Heart right ventricle (tissue), 16 donors: ENCODE measurements at regions of chr11 and their contacts with region 1.

Region 1: GRCh38 chr11:1335811-1336761 is 26.7 kb upstream of the TOLLIP start:
- DNase-seq: peak; percentile 49 to 68
- ATAC-seq: peak; percentile 63 to 79 (median 74)
- H3K4me3 ChIP-seq: peak overlapping the region in 9 of 10 donors; percentile 40 to 58 (median 51)
- H3K27ac ChIP-seq: peak overlapping the region in 7 of 10 donors; percentile 35 to 83 (median 52)
- H3K4me1 ChIP-seq: peaks cover 10 to 21% (median 17%) of the 10 kb centered on the region in 9 donors
- H3K27me3 ChIP-seq: peaks cover 0 to 6% (median 0%) of the 10 kb centered on the region in 7 donors
- CTCF ChIP-seq: no peak

Region 2: GRCh38 chr11:1382831-1383607 is 46.9 kb after region 1 on chr11:
- intact Hi-C with region 1: loop called in 1 of 10 experiments (anchors 5 kb)
- DNase-seq: peak; percentile 79 to 80
- ATAC-seq: peak; percentile 87 to 96 (median 92)
- H3K4me3 ChIP-seq: peak overlapping the region; percentile 41 to 66 (median 58)
- H3K27ac ChIP-seq: peak overlapping the region in 9 of 10 donors; percentile 31 to 89 (median 64)
- H3K4me1 ChIP-seq: peaks cover 0 to 16% (median 4%) of the 10 kb centered on the region in 9 donors
- H3K27me3 ChIP-seq: peaks cover 0 to 19% (median 4%) of the 10 kb centered on the region in 7 donors
- CTCF ChIP-seq: peak in 2 of 9 donors; percentile 4 to 8